ENCODE measurements at regions of chr4 and their contacts with region 1.

Region 1: DNA sequence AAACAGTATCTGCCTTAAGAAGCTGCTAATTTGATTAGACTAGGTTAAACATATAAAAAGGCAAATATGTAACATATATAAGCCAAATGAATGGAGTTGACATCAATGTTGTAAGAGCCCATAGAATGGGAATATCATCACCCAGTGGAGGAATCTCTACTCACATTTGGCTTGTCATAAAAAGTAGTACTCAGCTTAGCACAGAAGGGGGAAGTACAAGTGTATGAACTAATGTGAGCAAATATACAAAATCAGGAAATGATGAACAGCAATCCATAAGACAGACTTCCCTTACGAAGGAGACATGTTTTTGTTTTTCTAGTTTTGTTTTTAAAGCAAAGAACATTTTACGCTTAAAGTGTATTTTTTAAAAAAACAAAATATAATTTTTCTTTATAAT is 74.9 kb downstream of the MAB21L2 start:
- DNase-seq: no peak
- H3K4me3 ChIP-seq: no peak overlapping the region
- H3K27ac ChIP-seq: no peak overlapping the region
- H3K4me1 ChIP-seq: no peaks in the 10 kb centered on the region
- H3K27me3 ChIP-seq: no peaks in the 10 kb centered on the region
- CTCF ChIP-seq: no peak
- POLR2A ChIP-seq: no peak

Region 2: GRCh38 chr4:150609101-150609500 is 47.8 kb before region 1 on chr4:
- intact Hi-C with region 1: loop called (anchors 2 kb)
- DNase-seq: no peak
- H3K4me3 ChIP-seq: no peak overlapping the region
- H3K27ac ChIP-seq: no peak overlapping the region
- H3K4me1 ChIP-seq: no peaks in the 10 kb centered on the region
- H3K27me3 ChIP-seq: no peaks in the 10 kb centered on the region
- CTCF ChIP-seq: no peak
- POLR2A ChIP-seq: no peak

Region 3: GRCh38 chr4:150641612-150642011 is 15.3 kb before region 1 on chr4:
- intact Hi-C with region 1: no loop called
- DNase-seq: no peak
- H3K4me3 ChIP-seq: no peak overlapping the region
- H3K27ac ChIP-seq: no peak overlapping the region
- H3K4me1 ChIP-seq: no peaks in the 10 kb centered on the region
- H3K27me3 ChIP-seq: no peaks in the 10 kb centered on the region
- CTCF ChIP-seq: no peak
- POLR2A ChIP-seq: no peak

Measured in breast epithelium (tissue), 4 donors.